Activated B cell treated with CpG ODN at 0.5 μM for 24 hours (primary cell): ENCODE measurements at regions of chr10 and their contacts with region 1.

Region 1: DNA sequence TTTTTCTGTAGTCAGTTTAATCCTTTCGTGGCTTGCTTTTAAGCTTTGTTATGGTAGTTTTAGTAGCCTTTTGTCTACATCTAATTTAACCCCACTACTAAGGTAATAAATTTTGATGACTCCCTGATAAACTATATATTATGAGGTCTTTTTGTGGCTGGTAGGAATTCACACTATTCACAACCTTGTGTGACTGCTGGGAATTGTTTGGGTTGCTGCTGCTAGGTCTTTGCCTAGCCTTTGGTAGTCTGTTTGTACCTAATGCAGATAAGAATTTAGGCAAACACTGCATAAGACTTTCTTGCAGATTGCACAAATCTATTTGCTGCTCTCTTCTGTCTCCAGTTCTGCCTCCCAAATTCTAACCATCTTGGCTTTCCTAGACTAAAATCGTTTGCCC is 58.3 kb downstream of the SHOC2 start:
- DNase-seq: no peak
- ATAC-seq: no peak
- H3K4me3 Mint-ChIP-seq: no peak overlapping the region
- H3K27ac Mint-ChIP-seq: no peak overlapping the region
- H3K4me1 Mint-ChIP-seq: peaks cover 79% of the 10 kb centered on the region
- H3K27me3 Mint-ChIP-seq: no peaks in the 10 kb centered on the region
- CTCF ChIP-seq: no peak

Region 2: GRCh38 chr10:110967645-110968044 is 10.0 kb before region 1 on chr10:
- CTCF ChIA-PET with region 1: no interaction called
- POLR2A ChIA-PET with region 1: no interaction called
- intact Hi-C with region 1: loop called (anchors 1 kb)
- DNase-seq: no peak
- ATAC-seq: no peak
- H3K4me3 Mint-ChIP-seq: no peak overlapping the region
- H3K27ac Mint-ChIP-seq: no peak overlapping the region
- H3K4me1 Mint-ChIP-seq: peaks cover 66% of the 10 kb centered on the region
- H3K27me3 Mint-ChIP-seq: no peaks in the 10 kb centered on the region
- CTCF ChIP-seq: no peak

Region 3: GRCh38 chr10:110993024-110993693 is 15.5 kb after region 1 on chr10:
- CTCF ChIA-PET with region 1: no interaction called
- POLR2A ChIA-PET with region 1: no interaction called
- intact Hi-C with region 1: loop called (anchors 2 kb)
- DNase-seq: no peak
- ATAC-seq: no peak
- H3K4me3 Mint-ChIP-seq: no peak overlapping the region
- H3K27ac Mint-ChIP-seq: no peak overlapping the region
- H3K4me1 Mint-ChIP-seq: peaks cover 32% of the 10 kb centered on the region
- H3K27me3 Mint-ChIP-seq: no peaks in the 10 kb centered on the region
- CTCF ChIP-seq: no peak

Region 4: GRCh38 chr10:111004016-111004415 is 26.4 kb after region 1 on chr10:
- CTCF ChIA-PET with region 1: no interaction called
- POLR2A ChIA-PET with region 1: no interaction called
- intact Hi-C with region 1: loop called (anchors 5 kb)
- DNase-seq: no peak
- ATAC-seq: no peak
- H3K4me3 Mint-ChIP-seq: no peak overlapping the region
- H3K27ac Mint-ChIP-seq: no peak overlapping the region
- H3K4me1 Mint-ChIP-seq: peaks cover 2% of the 10 kb centered on the region
- H3K27me3 Mint-ChIP-seq: no peaks in the 10 kb centered on the region
- CTCF ChIP-seq: no peak